CD8-positive, alpha-beta T cell (primary cell): ENCODE measurements at regions of chr2 and their contacts with region 1.

Region 1: GRCh38 chr2:154452906-154453493 is 245.5 kb upstream of the KCNJ3 start:
- DNase-seq: peak in 1 of 9 experiments; percentile 4
- ATAC-seq: no peak
- H3K4me3 ChIP-seq: no peak overlapping the region
- H3K4me3 Mint-ChIP-seq: no peak overlapping the region
- H3K27ac ChIP-seq: no peak overlapping the region
- H3K27ac Mint-ChIP-seq: no peak overlapping the region
- H3K4me1 ChIP-seq: no peaks in the 10 kb centered on the region
- H3K4me1 Mint-ChIP-seq: peaks cover 3% of the 10 kb centered on the region
- H3K27me3 ChIP-seq: no peaks in the 10 kb centered on the region
- H3K27me3 Mint-ChIP-seq: no peaks in the 10 kb centered on the region
- CTCF ChIP-seq: no peak

Region 2: GRCh38 chr2:155099784-155100183 is 646.8 kb after region 1 on chr2:
- CTCF ChIA-PET with region 1: no interaction called
- POLR2A ChIA-PET with region 1: no interaction called
- intact Hi-C with region 1: loop called in 1 of 2 experiments (anchors 10 kb)
- DNase-seq: no peak
- ATAC-seq: no peak
- H3K4me3 ChIP-seq: no peak overlapping the region
- H3K4me3 Mint-ChIP-seq: no peak overlapping the region
- H3K27ac ChIP-seq: no peak overlapping the region
- H3K27ac Mint-ChIP-seq: no peak overlapping the region
- H3K4me1 ChIP-seq: no peaks in the 10 kb centered on the region
- H3K4me1 Mint-ChIP-seq: no peaks in the 10 kb centered on the region
- H3K27me3 ChIP-seq: no peaks in the 10 kb centered on the region
- H3K27me3 Mint-ChIP-seq: no peaks in the 10 kb centered on the region
- CTCF ChIP-seq: no peak